ENCODE measurements at regions of chr20 and their contacts with region 1.

Region 1: GRCh38 chr20:63973636-63974402 is 4.1 kb upstream of the ZNF512B start:
- DNase-seq: peak; percentile 93 to 97
- ATAC-seq: peak; percentile 95
- H3K4me3 ChIP-seq: no peak overlapping the region
- H3K27ac ChIP-seq: no peak overlapping the region
- H3K4me1 ChIP-seq: no peaks in the 10 kb centered on the region
- H3K27me3 ChIP-seq: no peaks in the 10 kb centered on the region

Region 2: DNA sequence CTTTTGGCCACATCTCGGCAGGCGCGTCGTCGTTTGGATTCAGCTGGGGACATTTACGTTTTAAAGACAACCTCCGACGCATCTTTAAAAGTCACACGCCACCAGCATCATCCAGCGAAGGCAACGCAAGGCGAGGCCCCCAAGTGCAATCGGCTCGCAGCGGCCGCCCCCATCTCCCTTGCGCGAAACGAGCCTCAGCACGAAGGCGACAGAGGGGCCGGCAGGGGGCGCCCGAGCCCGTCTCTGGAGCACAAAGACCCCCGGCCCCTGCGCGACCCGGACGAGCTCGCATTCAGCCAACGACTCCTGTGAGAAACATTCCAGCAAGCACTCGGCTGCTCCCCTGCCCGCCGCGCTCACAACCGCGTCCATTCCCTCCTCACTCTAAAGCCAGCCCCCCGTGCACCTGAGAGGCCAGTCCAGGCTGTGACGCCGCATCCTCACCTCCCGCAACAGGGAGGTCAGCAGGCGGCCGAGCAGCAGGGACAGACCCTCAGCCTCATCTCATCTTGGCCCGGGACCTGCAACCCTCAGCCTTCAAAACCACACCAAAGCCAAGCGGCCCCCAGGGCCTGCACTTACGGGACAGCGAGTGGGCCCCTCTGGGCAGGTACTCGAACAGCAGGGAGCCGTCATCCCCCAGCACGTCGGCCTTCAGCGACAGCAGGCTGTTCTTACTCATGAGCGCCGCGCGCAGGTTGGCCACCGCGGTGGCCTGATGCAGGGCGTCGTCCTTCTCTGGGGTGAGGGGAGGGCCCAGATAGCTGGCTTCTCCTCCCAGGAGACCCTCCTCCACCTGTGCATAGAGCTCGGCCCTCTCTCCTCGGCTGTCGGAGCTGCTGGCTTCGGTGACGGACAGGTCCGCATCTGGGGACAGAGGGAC is 198.5 kb before region 1 on chr20:
- intact Hi-C with region 1: loop called in 1 of 2 experiments (anchors 5 kb)
- DNase-seq: peak in 1 of 2 donors; percentile 88
- ATAC-seq: peak; percentile 38
- H3K4me3 ChIP-seq: no peak overlapping the region
- H3K27ac ChIP-seq: no peak overlapping the region
- H3K4me1 ChIP-seq: no peaks in the 10 kb centered on the region
- H3K27me3 ChIP-seq: no peaks in the 10 kb centered on the region

Region 3: DNA sequence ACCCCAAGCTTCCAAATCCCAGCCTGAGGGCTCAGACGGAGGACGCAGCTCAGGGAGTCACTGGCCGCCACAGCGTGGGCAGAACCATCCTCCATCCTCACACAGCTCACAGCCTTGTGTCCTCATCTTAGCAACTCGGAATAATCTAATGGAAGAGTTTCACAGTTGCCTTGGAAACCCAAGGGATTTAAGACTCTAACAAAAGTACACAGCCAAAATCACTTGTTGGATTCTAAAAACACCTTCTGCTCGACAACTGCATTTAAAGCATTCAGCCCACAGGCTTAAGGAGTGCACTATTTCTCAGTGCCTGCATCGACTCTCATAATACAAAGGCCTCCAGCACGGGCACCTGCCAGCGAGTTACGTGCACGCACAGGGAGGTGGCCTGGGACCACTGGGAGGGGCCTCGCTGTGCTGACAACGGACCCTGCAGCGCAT is 188.1 kb before region 1 on chr20:
- intact Hi-C with region 1: loop called in 1 of 2 experiments (anchors 5 kb)
- DNase-seq: no peak
- ATAC-seq: no peak
- H3K4me3 ChIP-seq: no peak overlapping the region
- H3K27ac ChIP-seq: no peak overlapping the region
- H3K4me1 ChIP-seq: no peaks in the 10 kb centered on the region
- H3K27me3 ChIP-seq: no peaks in the 10 kb centered on the region

Region 4: GRCh38 chr20:63894358-63895201 is 79.2 kb before region 1 on chr20 and contains the start of gene DNAJC5:
- intact Hi-C with region 1: no loop called
- DNase-seq: peak; percentile 97 to 98
- ATAC-seq: peak; percentile 97
- H3K4me3 ChIP-seq: peak within 1 kb of the TSS; percentile 91 to 93
- H3K27ac ChIP-seq: no peak within 1 kb of the TSS
- H3K4me1 ChIP-seq: peaks cover 0 to 4% of the 10 kb centered on the region in 2 donors
- H3K27me3 ChIP-seq: no peaks in the 10 kb centered on the region
- total RNA-seq, gene DNAJC5: 34.6 to 38.1 TPM

Measured in aorta (tissue), 5 donors.